ENCODE measurements at regions of chr18 and their contacts with region 1.

Region 1: DNA sequence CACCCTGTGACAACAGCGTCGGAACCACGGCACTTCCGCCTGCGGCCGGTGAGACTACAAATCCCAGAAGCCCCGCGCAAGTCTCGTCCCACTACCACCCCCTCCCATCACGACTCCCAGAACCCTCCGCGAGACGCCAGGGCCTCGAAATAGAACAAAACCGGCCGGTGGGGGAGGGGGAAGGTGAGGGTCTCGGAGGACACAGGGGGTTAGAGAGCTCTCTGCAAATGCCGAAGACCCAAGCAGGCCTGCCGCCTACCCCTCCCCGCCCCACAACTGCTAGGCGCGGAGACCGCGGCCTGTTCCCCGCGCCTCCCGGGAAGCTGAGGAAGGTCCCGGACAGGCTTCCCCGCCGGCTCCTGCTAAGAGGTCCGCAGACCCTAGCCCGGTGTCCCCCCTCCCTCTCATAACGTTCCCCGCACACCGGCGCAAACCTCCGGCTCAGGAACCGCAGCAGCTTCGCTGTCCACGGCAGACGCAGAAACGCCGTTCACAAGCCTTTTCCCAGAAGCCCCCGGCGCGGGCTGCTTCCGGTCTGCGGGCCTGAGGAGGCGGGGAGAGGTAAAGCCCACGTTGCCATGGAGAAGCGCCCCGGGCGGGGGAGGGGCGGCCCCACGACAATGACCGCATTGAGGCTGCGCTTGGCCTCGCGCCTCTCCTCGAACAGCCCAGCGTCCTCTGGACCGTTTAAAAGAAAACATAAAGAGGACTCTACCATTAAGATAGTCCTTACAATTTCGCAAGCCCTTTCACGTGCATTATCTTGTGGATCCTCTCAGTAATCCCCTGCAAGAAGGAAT is at the start of gene ZNF24:
- DNase-seq: peak in 1 of 2 donors; percentile 95
- H3K4me3 ChIP-seq: peak within 1 kb of the TSS; percentile 97 to 100
- H3K27ac ChIP-seq: peak within 1 kb of the TSS; percentile 100
- H3K4me1 ChIP-seq: peaks cover 46% of the 10 kb centered on the region
- H3K27me3 ChIP-seq: no peaks in the 10 kb centered on the region
- CTCF ChIP-seq: no peak
- POLR2A ChIP-seq: peak in 1 of 2 donors; percentile 67
- total RNA-seq, gene ZNF24: 24.8 TPM

Region 2: DNA sequence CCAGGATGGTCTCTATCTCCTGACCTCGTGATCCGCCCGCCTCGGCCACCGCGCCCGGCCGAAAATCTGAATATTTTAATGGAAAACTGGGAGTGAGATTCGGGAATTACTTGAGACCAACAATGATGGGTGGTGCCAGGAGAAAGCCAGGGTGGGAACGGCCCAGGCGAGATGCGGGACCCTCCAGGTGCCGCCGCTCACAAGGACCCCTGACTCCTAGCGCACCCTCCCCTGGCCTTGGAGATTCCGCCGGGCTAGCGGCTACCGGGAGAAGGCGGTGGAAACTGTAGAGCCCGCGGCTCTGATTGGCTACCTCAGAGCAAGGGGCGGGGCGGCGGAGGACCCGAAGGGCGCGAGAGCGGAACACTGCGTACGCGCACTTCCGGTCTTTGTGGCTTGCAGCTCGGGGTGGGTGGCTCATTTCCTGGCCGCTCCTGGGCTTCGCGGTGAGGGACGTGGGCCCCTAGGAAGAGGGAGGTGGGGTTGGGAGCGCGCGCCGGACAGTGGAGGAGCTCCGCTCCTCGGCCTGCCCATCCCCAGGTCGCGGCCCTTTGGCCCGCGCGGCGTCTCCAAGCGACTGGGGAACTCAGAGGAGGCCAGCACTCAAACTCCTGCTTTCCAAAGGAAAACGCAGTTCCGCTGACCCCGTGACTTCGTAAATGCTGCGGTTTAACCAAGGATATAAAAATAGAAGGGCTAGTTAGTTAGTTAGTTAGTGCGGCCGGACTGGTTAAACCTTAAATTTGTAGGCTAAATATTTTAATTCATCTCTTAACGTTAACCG is 103.3 kb before region 1 on chr18 and contains the start of gene ZNF397:
- intact Hi-C with region 1: loop called (anchors 5 kb)
- DNase-seq: peak in 1 of 2 donors; percentile 98
- H3K4me3 ChIP-seq: peak within 1 kb of the TSS; percentile 54 to 83
- H3K27ac ChIP-seq: peak within 1 kb of the TSS; percentile 98
- H3K4me1 ChIP-seq: peaks cover 17% of the 10 kb centered on the region
- H3K27me3 ChIP-seq: no peaks in the 10 kb centered on the region
- CTCF ChIP-seq: peak in 1 of 3 experiments; percentile 1
- POLR2A ChIP-seq: peak in 1 of 2 donors; percentile 92
- total RNA-seq, gene ZNF397: 31.9 TPM

Region 3: GRCh38 chr18:35289293-35290072 is 54.7 kb before region 1 on chr18:
- intact Hi-C with region 1: loop called (anchors 5 kb)
- DNase-seq: no peak
- H3K4me3 ChIP-seq: peak overlapping the region; percentile 66 to 74
- H3K27ac ChIP-seq: peak overlapping the region; percentile 77
- H3K4me1 ChIP-seq: peaks cover 27% of the 10 kb centered on the region
- H3K27me3 ChIP-seq: no peaks in the 10 kb centered on the region
- CTCF ChIP-seq: no peak
- POLR2A ChIP-seq: no peak